Activated CD4-positive, alpha-beta T cell treated with anti-CD3 and anti-CD28 coated beads, Interleukin-2, amount 10 ng/mL, durations not matched to agents 24 days and 14 days (primary cell): ENCODE measurements at regions of chr16 and their contacts with region 1.

Region 1: DNA sequence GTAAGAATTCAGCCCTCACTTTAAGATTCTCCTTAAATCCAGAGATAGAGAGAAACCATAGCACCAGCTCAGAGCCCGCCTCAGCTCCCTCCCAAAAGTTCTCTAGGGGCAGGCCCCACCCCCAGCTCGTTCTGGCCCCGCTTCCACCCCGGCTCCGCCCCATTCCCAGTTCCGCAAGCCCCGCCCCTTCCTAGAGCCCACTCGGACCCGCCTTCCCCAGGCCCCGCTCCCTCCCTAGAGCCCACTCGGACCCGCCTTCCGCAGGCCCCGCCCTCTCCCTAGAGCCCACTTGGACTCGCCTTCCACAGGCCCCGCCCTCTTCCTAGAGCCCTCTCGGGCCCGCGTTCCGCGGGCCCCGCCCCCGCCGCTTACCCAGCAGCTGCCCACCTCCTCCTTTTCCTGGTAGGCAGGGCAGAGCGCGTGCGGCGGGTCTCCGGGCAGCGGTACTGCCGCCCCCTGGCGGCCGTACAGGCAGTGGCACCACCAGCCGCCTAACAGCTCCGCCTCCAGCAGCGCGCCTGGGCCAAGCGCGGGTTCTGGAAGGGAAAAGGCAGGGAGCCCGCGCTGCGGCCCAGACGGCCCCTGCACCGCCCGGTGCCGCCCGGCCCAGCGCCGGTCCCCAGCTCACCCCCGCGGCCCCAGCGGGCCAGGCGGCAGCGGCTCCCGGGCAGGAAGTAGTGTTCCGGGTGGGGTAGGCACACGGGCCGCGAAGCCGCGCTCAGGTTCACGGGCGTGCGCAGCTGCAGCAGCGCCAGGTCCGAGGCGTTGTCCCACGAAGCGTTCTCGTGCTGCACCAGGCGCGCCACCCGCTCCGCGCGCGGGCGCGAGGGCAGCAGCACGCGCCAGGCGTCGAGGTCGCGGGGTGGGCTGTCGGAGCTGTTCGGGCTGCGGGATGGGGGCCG is 6.8 kb upstream of the PRSS8 start:
- DNase-seq: peak; percentile 99
- H3K4me3 Mint-ChIP-seq: peak overlapping the region; percentile 69
- H3K27ac Mint-ChIP-seq: peak overlapping the region; percentile 82
- H3K4me1 Mint-ChIP-seq: peaks cover 8% of the 10 kb centered on the region
- H3K27me3 Mint-ChIP-seq: no peaks in the 10 kb centered on the region

Region 2: GRCh38 chr16:30957456-30958174 is 184.7 kb before region 1 on chr16 and contains the start of gene SETD1A:
- intact Hi-C with region 1: loop called (anchors 1 kb)
- DNase-seq: peak; percentile 99
- H3K4me3 Mint-ChIP-seq: peak within 1 kb of the TSS; percentile 94
- H3K27ac Mint-ChIP-seq: peak within 1 kb of the TSS; percentile 99
- H3K4me1 Mint-ChIP-seq: peaks cover 32% of the 10 kb centered on the region
- H3K27me3 Mint-ChIP-seq: no peaks in the 10 kb centered on the region
- total RNA-seq, gene SETD1A: 30.7 and 31.5 TPM in 2 replicates

Region 3: DNA sequence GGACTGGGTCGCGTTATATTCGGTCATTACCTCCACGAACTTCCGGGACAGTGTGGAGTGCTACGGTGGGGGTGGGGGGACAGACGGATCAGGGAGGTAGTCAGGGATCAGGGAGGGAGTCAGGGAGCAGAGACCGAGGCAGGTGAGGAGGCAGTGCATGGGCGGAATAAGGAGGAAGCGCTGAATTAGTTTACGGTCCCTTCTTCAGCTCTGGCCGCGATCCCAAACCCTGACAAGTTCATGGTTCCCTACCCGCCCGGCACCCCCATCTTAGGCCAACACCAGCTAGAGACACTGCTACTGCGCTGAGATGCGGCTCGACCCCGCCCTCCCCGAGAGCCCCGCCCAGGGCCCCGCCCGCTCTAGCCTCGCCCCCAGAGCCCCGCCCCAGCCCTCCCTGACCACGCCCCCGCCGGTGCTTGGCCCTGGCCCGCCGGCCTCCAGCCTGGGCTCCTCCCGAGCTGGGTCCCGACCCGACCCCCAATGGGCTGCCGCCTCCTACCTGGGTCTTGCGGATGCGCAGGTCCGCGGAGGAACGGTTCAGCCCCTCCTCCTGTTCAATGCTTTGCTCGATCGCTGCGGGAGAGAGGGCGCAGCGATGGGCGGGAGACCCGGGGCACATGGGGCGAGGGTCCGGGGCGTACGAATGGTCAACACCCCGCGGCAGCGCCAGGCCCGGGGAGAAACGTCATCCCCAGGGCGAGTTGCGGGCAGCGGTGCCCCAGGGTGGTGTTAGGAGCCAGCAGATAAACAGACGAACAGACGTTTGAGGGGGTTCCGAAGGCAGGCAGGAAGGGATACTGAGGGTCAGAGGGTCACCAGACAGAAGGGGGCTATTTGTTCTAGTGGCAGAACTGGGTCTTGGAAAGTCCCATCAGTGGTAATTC is 145.1 kb before region 1 on chr16:
- intact Hi-C with region 1: loop called (anchors 5 kb)
- DNase-seq: peak; percentile 90
- H3K4me3 Mint-ChIP-seq: peak overlapping the region; percentile 85
- H3K27ac Mint-ChIP-seq: peak overlapping the region; percentile 71
- H3K4me1 Mint-ChIP-seq: peaks cover 7% of the 10 kb centered on the region
- H3K27me3 Mint-ChIP-seq: peaks cover 1% of the 10 kb centered on the region

Region 4: DNA sequence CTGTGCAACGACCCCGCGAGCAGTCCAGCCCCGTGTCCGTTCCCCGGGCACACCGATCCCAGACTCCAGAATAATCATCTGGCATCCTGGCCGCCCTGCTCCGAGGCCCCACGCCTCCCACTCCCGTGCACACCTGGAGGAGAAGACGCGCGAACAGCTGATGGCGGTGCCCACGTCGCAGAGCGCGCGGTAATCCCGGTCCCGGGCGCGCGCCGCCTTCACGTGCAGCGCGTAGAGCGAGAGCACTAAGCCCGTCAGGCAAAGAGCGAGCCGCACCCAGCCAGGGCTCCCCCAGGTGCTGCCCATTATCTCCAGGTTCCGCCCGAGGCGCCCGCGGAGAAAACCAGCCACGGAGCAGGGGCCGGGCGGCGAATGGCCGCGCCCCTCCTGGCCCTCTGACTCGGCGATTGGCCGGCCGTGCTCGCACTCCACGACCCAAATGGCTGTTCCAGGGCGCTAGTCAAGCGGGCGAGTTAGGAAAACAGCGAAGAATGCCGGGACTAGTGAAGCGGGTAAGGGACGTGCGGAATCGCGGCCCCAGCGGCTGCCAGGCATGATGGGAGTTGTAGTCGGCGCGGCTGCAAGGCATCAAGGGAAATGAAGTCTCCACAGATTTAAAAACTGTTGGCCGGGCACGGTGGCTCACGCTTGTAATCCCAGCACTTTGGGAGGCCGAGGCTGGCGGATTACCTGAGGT is 47.8 kb before region 1 on chr16 and contains the start of gene VKORC1:
- intact Hi-C with region 1: loop called (anchors 1 kb)
- DNase-seq: peak; percentile 96
- H3K4me3 Mint-ChIP-seq: peak within 1 kb of the TSS; percentile 95
- H3K27ac Mint-ChIP-seq: peak within 1 kb of the TSS; percentile 94
- H3K4me1 Mint-ChIP-seq: peaks cover 23% of the 10 kb centered on the region
- H3K27me3 Mint-ChIP-seq: no peaks in the 10 kb centered on the region
- total RNA-seq, gene VKORC1: 56.2 and 59.1 TPM in 2 replicates

Region 5: DNA sequence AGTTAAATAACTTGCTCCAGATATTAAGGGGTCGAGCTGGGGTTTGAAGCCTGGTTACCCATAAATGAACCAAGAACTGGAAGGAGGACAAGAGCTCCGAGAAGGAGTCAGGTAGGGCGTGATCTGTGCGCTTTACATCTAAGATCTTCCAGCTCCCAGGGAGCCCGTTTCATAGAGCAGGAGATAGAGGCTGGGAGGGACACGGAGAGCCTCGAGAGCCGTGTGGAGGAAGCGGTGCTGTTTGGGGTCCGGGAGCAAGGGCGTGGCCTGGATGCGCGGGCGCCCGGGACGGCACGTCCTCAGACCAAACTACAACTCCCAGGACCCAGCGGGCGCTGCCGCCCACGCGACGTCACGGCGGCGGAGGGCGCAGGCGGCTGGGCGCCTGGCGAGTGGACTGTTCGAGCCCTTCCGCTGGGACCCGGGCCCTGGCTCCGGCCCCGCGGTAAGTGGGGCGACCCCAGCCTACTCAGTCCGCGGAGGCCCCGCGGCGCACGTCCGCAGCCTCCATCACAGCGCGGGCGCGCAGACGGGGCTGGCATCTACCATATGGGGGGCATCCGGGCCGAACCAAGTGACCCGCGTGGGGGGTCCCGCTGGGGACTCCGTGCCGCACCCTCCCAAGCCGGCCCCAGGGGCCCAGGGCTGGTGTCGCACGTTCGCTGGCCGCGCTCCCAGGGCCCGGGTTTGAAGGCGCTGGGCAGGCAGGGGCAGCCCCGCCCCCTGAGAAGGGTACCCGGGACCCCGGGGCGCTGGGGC is 34.1 kb before region 1 on chr16 and contains the start of gene BCKDK:
- intact Hi-C with region 1: loop called (anchors 5 kb)
- DNase-seq: peak; percentile 93
- H3K4me3 Mint-ChIP-seq: peak within 1 kb of the TSS; percentile 92
- H3K27ac Mint-ChIP-seq: peak within 1 kb of the TSS; percentile 95
- H3K4me1 Mint-ChIP-seq: peaks cover 22% of the 10 kb centered on the region
- H3K27me3 Mint-ChIP-seq: no peaks in the 10 kb centered on the region
- total RNA-seq, gene BCKDK: 44.3 and 44.9 TPM in 2 replicates

Region 6: GRCh38 chr16:31117391-31118197 is 24.8 kb before region 1 on chr16 and contains the start of gene KAT8:
- intact Hi-C with region 1: loop called (anchors 1 kb)
- DNase-seq: peak; percentile 99
- H3K4me3 Mint-ChIP-seq: peak within 1 kb of the TSS; percentile 88
- H3K27ac Mint-ChIP-seq: peak within 1 kb of the TSS; percentile 89
- H3K4me1 Mint-ChIP-seq: peaks cover 11% of the 10 kb centered on the region
- H3K27me3 Mint-ChIP-seq: no peaks in the 10 kb centered on the region
- total RNA-seq, gene KAT8: 56.9 and 63.3 TPM in 2 replicates

Region 7: GRCh38 chr16:31229501-31229900 is 87.1 kb after region 1 on chr16:
- intact Hi-C with region 1: no loop called
- DNase-seq: no peak
- H3K4me3 Mint-ChIP-seq: no peak overlapping the region
- H3K27ac Mint-ChIP-seq: no peak overlapping the region
- H3K4me1 Mint-ChIP-seq: peaks cover 2% of the 10 kb centered on the region
- H3K27me3 Mint-ChIP-seq: no peaks in the 10 kb centered on the region

Region 8: GRCh38 chr16:31386157-31386984 is 244.0 kb after region 1 on chr16:
- intact Hi-C with region 1: loop called (anchors 1 kb)
- DNase-seq: peak; percentile 64
- H3K4me3 Mint-ChIP-seq: peak overlapping the region; percentile 6
- H3K27ac Mint-ChIP-seq: peak overlapping the region; percentile 77
- H3K4me1 Mint-ChIP-seq: peaks cover 30% of the 10 kb centered on the region
- H3K27me3 Mint-ChIP-seq: peaks cover 15% of the 10 kb centered on the region